WTC11 (cell line): ENCODE measurements at regions of chr6 and their contacts with region 1.

Region 1: GRCh38 chr6:135909737-135910387 is 58.4 kb downstream of the PDE7B start:
- DNase-seq: peak; percentile 61
- ATAC-seq: peak; percentile 99
- H3K4me3 Mint-ChIP-seq: no peak overlapping the region
- H3K27ac Mint-ChIP-seq: no peak overlapping the region
- H3K4me1 Mint-ChIP-seq: no peaks in the 10 kb centered on the region
- H3K27me3 Mint-ChIP-seq: no peaks in the 10 kb centered on the region
- CTCF ChIP-seq: peak; percentile 49; the same call in 1 of the 2 replicates

Region 2: DNA sequence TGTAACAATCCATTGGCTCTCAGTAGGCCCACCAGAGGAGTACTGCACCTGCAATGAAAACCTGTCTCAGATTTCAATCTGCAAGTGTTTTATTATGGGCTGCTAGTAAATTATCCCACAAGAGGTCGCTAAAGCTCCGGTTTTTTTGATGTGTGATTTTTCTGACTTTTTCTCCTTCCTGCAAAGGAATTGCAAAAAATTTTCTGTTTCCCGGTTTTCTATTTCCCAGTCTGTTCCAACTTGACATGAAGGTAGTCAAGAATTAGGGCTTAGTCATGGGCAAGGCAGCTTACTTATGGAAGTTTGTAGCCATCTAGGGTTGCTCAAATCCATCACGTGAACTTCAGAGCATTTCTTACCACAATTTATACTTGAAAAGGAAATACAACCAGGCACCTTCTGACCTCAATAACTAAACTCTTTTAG is 373.9 kb before region 1 on chr6:
- CTCF ChIA-PET with region 1: interaction called, 10 read pairs
- POLR2A ChIA-PET with region 1: no interaction called
- DNase-seq: no peak
- ATAC-seq: peak; percentile 86
- H3K4me3 Mint-ChIP-seq: no peak overlapping the region
- H3K27ac Mint-ChIP-seq: no peak overlapping the region
- H3K4me1 Mint-ChIP-seq: peaks cover 8% of the 10 kb centered on the region
- H3K27me3 Mint-ChIP-seq: no peaks in the 10 kb centered on the region
- CTCF ChIP-seq: no peak

Region 3: DNA sequence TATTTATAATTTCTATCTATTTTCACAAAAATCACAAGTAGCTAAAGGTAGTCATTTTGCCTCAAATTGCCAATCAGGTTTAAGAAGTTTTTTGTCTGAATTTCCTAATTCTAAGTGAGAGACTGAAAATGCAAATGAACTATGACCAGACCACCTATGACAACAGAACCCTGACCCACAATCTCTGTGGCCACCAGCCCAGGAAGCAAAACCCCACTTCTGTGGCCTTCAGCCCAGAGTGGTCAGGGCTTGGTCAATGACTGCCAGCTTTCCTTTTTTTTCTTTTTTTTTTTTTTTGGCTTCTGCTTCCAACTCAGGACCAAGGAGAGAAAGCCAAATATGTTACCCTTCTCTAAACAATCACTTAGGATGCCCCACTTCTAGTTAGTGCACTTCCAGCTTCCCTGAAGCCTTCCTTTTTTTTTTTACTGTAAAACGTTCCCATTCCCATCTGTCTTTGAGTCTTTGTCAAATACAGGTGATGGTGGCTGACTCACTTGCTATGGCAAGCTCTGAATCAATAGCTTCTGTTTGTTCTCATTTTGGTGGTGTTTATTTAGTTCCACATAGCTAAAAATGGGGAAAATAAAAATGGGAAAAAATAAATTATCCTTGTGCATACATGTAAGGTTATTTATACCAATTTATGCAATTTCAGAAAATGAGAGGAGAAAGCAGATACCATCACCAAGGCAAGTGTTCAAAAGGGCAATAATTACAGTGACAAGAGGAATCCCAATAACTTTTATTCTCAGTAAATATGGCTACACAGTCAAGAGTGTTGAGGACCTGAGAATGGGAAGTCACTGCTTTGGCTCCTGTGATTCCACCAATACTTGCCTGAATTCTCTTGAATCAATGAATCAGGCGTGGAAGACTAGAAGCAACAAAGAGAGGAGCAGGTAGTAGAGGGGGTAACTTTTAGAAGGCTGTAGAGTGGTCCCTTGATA is 228.6 kb before region 1 on chr6:
- CTCF ChIA-PET with region 1: interaction called, 13 read pairs
- POLR2A ChIA-PET with region 1: no interaction called
- DNase-seq: no peak
- ATAC-seq: no peak
- H3K4me3 Mint-ChIP-seq: no peak overlapping the region
- H3K27ac Mint-ChIP-seq: no peak overlapping the region
- H3K4me1 Mint-ChIP-seq: no peaks in the 10 kb centered on the region
- H3K27me3 Mint-ChIP-seq: no peaks in the 10 kb centered on the region; the same call in 1 of the 2 replicates
- CTCF ChIP-seq: no peak

Region 4: DNA sequence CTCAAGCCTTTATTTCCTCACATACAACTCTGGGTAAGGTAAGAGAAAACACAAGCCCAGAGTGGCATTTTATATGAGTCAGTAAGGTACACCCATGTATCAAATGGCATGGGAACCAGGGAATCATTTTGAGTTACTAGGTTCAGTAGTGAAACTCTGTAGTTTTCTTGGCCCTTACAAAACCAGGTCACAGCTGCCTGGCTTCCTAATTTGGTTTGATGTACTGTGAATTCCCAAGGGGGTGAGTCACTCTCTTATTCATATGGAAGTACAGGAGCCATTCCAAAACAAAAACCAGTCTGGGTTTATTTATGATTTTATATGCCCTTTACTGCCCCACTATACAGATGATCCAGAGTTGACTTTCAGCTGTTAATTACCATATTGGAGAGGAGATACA is 12.3 kb after region 1 on chr6:
- CTCF ChIA-PET with region 1: interaction called, 10 read pairs
- POLR2A ChIA-PET with region 1: no interaction called
- DNase-seq: no peak
- ATAC-seq: peak; percentile 94
- H3K4me3 Mint-ChIP-seq: no peak overlapping the region
- H3K27ac Mint-ChIP-seq: peak overlapping the region; percentile 95
- H3K4me1 Mint-ChIP-seq: peaks cover 40% of the 10 kb centered on the region
- H3K27me3 Mint-ChIP-seq: no peaks in the 10 kb centered on the region
- CTCF ChIP-seq: no peak

Region 5: GRCh38 chr6:136007345-136007744 is 97.5 kb after region 1 on chr6:
- CTCF ChIA-PET with region 1: no interaction called
- POLR2A ChIA-PET with region 1: no interaction called
- DNase-seq: no peak
- ATAC-seq: no peak
- H3K4me3 Mint-ChIP-seq: no peak overlapping the region
- H3K27ac Mint-ChIP-seq: no peak overlapping the region
- H3K4me1 Mint-ChIP-seq: no peaks in the 10 kb centered on the region
- H3K27me3 Mint-ChIP-seq: no peaks in the 10 kb centered on the region; the same call in 1 of the 2 replicates
- CTCF ChIP-seq: no peak

Region 6: GRCh38 chr6:136226027-136226673 is 316.3 kb after region 1 on chr6:
- CTCF ChIA-PET with region 1: interaction called, 12 read pairs
- POLR2A ChIA-PET with region 1: no interaction called
- DNase-seq: peak; percentile 36
- ATAC-seq: peak; percentile 76
- H3K4me3 Mint-ChIP-seq: no peak overlapping the region
- H3K27ac Mint-ChIP-seq: no peak overlapping the region
- H3K4me1 Mint-ChIP-seq: no peaks in the 10 kb centered on the region
- H3K27me3 Mint-ChIP-seq: peaks cover 4% of the 10 kb centered on the region; the same call in 1 of the 2 replicates
- CTCF ChIP-seq: peak; percentile 100